Natural killer cell (primary cell): ENCODE measurements at regions of chr21 and their contacts with region 1.

Region 1: GRCh38 chr21:33360881-33361602 is 36.3 kb downstream of the IFNAR1 start:
- DNase-seq: peak; percentile 74 to 93
- ATAC-seq: peak; percentile 72 to 83 (median 75)
- H3K4me3 ChIP-seq: peak overlapping the region; percentile 26
- H3K4me3 Mint-ChIP-seq: peak overlapping the region; percentile 82
- H3K27ac ChIP-seq: no peak overlapping the region
- H3K27ac Mint-ChIP-seq: peak overlapping the region; percentile 67 to 81
- H3K4me1 ChIP-seq: peaks cover 15% of the 10 kb centered on the region
- H3K4me1 Mint-ChIP-seq: peaks cover 15 to 18% of the 10 kb centered on the region in 2 donors
- H3K27me3 ChIP-seq: no peaks in the 10 kb centered on the region
- H3K27me3 Mint-ChIP-seq: peaks cover 12 to 15% of the 10 kb centered on the region in 2 donors
- CTCF ChIP-seq: peak; percentile 92

Region 2: GRCh38 chr21:33441489-33442477 is 80.7 kb after region 1 on chr21:
- intact Hi-C with region 1: loop called (anchors 1 kb)
- DNase-seq: no peak
- ATAC-seq: no peak
- H3K4me3 ChIP-seq: no peak overlapping the region
- H3K4me3 Mint-ChIP-seq: no peak overlapping the region
- H3K27ac ChIP-seq: peak overlapping the region; percentile 61
- H3K27ac Mint-ChIP-seq: no peak overlapping the region
- H3K4me1 ChIP-seq: peaks cover 10% of the 10 kb centered on the region
- H3K4me1 Mint-ChIP-seq: no peaks in the 10 kb centered on the region
- H3K27me3 ChIP-seq: no peaks in the 10 kb centered on the region
- H3K27me3 Mint-ChIP-seq: no peaks in the 10 kb centered on the region
- CTCF ChIP-seq: no peak

Region 3: GRCh38 chr21:33608559-33608958 is 247.5 kb after region 1 on chr21:
- intact Hi-C with region 1: loop called (anchors 10 kb)
- DNase-seq: no peak
- ATAC-seq: no peak
- H3K4me3 ChIP-seq: no peak overlapping the region
- H3K4me3 Mint-ChIP-seq: no peak overlapping the region
- H3K27ac ChIP-seq: no peak overlapping the region
- H3K27ac Mint-ChIP-seq: no peak overlapping the region
- H3K4me1 ChIP-seq: no peaks in the 10 kb centered on the region
- H3K4me1 Mint-ChIP-seq: peaks cover 0 to 5% of the 10 kb centered on the region in 2 donors
- H3K27me3 ChIP-seq: no peaks in the 10 kb centered on the region
- H3K27me3 Mint-ChIP-seq: no peaks in the 10 kb centered on the region
- CTCF ChIP-seq: no peak